CD8-positive, alpha-beta T cell (primary cell): ENCODE measurements at regions of chr1 and their contacts with region 1.

Region 1: GRCh38 chr1:30718636-30719405 is 4.6 kb downstream of the MATN1 start:
- DNase-seq: peak; percentile 77 to 97 (median 84)
- ATAC-seq: peak; percentile 11
- H3K4me3 ChIP-seq: peak overlapping the region; percentile 84 to 98
- H3K4me3 Mint-ChIP-seq: peak overlapping the region; percentile 87
- H3K27ac ChIP-seq: peak overlapping the region; percentile 99
- H3K27ac Mint-ChIP-seq: peak overlapping the region; percentile 94
- H3K4me1 ChIP-seq: peaks cover 34% of the 10 kb centered on the region
- H3K4me1 Mint-ChIP-seq: peaks cover 42% of the 10 kb centered on the region
- H3K27me3 ChIP-seq: no peaks in the 10 kb centered on the region
- H3K27me3 Mint-ChIP-seq: no peaks in the 10 kb centered on the region
- CTCF ChIP-seq: no peak

Region 2: GRCh38 chr1:30738040-30738714 is 19.4 kb after region 1 on chr1:
- CTCF ChIA-PET with region 1: interaction called, 64 read pairs
- POLR2A ChIA-PET with region 1: interaction called, 24 read pairs
- intact Hi-C with region 1: loop called (anchors 1 kb)
- DNase-seq: no peak
- ATAC-seq: no peak
- H3K4me3 ChIP-seq: no peak overlapping the region
- H3K4me3 Mint-ChIP-seq: no peak overlapping the region
- H3K27ac ChIP-seq: peak overlapping the region; percentile 18 to 40
- H3K27ac Mint-ChIP-seq: peak overlapping the region; percentile 85
- H3K4me1 ChIP-seq: peaks cover 41% of the 10 kb centered on the region
- H3K4me1 Mint-ChIP-seq: peaks cover 57% of the 10 kb centered on the region
- H3K27me3 ChIP-seq: no peaks in the 10 kb centered on the region
- H3K27me3 Mint-ChIP-seq: no peaks in the 10 kb centered on the region
- CTCF ChIP-seq: no peak

Region 3: DNA sequence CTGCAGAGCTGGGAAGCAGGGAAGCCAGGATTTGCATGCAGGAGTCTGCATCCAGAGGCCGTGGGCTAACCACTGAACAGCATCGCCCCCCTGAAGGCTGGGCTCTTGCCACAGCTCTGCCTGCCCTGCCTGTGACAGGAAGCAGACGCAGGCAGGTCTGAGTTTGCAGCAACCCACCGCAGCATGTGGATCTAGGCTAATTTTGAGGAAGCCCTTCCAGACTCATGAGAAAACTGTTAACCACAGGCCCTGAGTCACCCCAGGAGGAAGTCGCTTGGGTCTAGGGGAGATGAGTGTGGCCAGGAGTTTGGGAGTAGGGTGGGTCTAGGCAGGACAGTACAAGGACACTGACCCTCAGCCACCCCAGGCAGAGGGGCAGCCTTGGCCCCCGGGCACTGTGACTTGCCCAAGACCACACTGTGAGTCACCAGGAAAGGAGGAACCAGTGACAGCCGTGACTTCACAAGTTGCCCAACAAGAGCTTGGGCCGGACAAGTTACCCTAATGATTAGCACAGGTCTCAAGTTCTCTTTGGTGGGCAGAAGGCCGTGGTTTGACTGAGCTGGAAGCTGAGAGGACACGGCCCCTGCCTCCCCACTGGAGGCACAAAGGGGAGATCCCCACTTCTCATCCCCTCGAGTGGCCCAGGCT is 37.8 kb after region 1 on chr1:
- CTCF ChIA-PET with region 1: interaction called, 86 read pairs
- POLR2A ChIA-PET with region 1: interaction called, 101 read pairs
- intact Hi-C with region 1: loop called (anchors 2 kb)
- DNase-seq: peak; percentile 52 to 92 (median 80)
- ATAC-seq: peak; percentile 59
- H3K4me3 ChIP-seq: peak overlapping the region; percentile 70 to 87
- H3K4me3 Mint-ChIP-seq: peak overlapping the region; percentile 97
- H3K27ac ChIP-seq: peak overlapping the region; percentile 78 to 92
- H3K27ac Mint-ChIP-seq: peak overlapping the region; percentile 99
- H3K4me1 ChIP-seq: peaks cover 72% of the 10 kb centered on the region
- H3K4me1 Mint-ChIP-seq: peaks cover 86% of the 10 kb centered on the region
- H3K27me3 ChIP-seq: no peaks in the 10 kb centered on the region
- H3K27me3 Mint-ChIP-seq: no peaks in the 10 kb centered on the region
- CTCF ChIP-seq: no peak

Region 4: DNA sequence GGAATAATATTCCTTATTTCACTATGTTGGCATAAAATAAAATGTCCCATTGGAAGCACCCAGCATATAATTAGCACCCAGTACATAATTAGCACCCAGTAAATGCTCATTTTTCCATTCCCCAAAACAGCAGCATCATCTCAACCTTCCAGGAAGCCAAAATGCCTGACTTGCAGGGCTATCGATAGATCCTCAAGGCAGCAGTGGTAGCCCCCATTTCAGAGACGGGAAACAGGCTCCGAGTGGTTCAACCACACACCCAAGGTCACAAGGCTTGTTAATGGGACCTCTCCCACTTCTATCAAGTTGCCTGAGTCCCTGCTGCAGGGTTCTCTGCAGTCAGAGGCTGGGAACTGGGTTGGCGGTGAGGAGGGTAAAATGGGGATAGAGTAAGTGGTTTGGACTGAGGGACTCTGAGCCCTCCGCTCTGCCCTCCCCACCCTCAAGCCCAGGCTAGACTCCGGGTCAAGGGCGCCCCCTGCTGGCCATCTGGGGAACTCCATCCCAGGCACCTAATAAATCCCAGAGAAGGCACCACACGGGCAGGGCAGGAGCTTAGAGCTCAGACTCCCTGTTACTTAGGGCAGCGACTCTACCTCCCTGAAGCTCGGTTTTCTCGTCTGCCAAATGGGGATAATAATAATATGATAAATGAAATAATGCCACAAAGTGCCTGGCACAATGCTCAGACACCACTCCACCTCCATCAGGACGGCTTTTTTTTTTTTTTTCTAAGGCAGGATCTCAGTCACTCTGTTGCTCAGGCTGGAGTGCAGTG is 60.7 kb after region 1 on chr1:
- CTCF ChIA-PET with region 1: interaction called, 485 read pairs
- POLR2A ChIA-PET with region 1: interaction called, 50 read pairs
- intact Hi-C with region 1: loop called in 1 of 2 experiments (anchors 1 kb)
- DNase-seq: peak; percentile 84 to 99 (median 90)
- ATAC-seq: peak; percentile 89
- H3K4me3 ChIP-seq: peak overlapping the region in 1 of 2 experiments; percentile 8
- H3K4me3 Mint-ChIP-seq: no peak overlapping the region
- H3K27ac ChIP-seq: no peak overlapping the region
- H3K27ac Mint-ChIP-seq: no peak overlapping the region
- H3K4me1 ChIP-seq: peaks cover 16% of the 10 kb centered on the region
- H3K4me1 Mint-ChIP-seq: peaks cover 17% of the 10 kb centered on the region
- H3K27me3 ChIP-seq: no peaks in the 10 kb centered on the region
- H3K27me3 Mint-ChIP-seq: no peaks in the 10 kb centered on the region
- CTCF ChIP-seq: peak; percentile 83

Region 5: DNA sequence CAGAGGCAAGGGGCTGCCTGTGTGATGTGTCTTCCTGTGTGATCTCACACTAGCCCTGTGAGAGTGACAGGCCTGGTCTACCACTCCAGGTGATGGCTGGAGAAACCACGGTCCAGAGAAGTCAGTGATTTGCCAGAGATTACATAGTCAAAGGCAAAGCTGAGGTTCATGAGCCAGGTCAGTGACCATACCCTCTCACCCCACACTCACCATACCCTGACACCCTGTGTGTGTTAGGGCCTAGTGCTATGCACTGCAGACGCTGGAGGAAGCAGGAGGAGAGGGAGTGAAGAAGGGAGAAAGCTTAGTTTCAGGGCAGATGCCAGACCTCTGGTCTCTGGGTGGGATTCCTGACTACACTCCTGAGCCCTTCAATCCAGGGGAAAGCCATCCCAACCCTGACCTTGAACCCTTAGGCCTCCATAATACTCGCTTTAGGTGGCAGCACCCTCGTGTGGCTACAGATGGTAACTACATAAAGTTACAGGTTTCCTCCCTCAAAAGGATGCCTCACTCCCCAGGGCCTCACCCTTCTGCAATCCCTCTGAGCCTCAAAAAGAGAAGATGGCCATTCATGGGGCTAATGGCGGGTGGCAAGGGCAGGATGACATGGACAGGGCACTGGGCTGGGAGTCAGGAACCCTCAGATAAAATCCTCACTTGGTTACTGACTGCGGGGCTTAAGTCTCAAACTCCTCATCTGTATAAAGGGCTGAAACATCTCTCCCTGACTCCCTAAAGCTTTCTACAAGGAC is 210.5 kb after region 1 on chr1:
- CTCF ChIA-PET with region 1: interaction called, 10 read pairs
- POLR2A ChIA-PET with region 1: no interaction called
- intact Hi-C with region 1: loop called (anchors 1 kb)
- DNase-seq: peak in 7 of 9 experiments; percentile 20 to 65 (median 51)
- ATAC-seq: peak; percentile 76
- H3K4me3 ChIP-seq: no peak overlapping the region
- H3K4me3 Mint-ChIP-seq: no peak overlapping the region
- H3K27ac ChIP-seq: peak overlapping the region in 1 of 2 experiments; percentile 55
- H3K27ac Mint-ChIP-seq: peak overlapping the region; percentile 10
- H3K4me1 ChIP-seq: peaks cover 3% of the 10 kb centered on the region
- H3K4me1 Mint-ChIP-seq: no peaks in the 10 kb centered on the region
- H3K27me3 ChIP-seq: no peaks in the 10 kb centered on the region
- H3K27me3 Mint-ChIP-seq: no peaks in the 10 kb centered on the region
- CTCF ChIP-seq: peak; percentile 76

Region 6: DNA sequence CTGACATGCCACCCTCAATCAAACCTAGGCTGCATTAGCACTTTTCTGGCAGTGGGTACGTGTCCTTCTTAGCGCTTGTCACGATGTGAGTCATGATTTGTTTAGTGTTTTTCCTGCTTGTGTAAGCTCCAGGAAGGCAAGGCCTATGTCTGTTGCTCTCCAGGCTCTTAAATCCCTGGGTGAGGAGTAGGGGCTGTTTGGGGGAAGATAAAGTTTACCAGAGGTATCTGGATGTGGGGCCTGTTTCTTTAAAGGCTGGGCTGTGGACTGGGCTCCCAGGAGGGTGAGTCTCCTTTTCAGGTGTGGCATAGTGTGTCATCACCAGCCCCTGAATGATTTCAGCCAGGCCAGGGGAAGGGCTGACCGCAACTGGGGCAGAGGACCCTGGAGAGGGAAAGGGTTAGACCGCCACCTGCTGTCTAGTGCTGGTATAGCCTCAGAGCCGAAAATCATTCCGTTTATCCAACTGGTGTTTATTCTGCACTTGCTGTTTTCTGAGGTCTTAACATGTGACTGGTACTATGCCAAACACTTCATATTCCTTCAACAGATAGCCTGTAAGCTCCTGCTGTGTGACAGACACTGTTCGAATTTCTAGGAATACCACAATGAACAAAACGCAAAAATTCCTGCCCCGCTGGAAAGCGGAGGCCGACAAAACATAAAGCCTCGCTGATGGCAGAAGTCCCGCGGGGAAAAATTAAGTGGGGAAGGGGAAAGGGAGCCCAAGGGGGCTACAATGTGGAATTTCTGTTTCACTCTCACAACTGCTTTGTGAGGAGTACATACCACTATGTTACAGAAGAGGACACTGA is 703.9 kb after region 1 on chr1:
- CTCF ChIA-PET with region 1: no interaction called
- POLR2A ChIA-PET with region 1: no interaction called
- intact Hi-C with region 1: loop called in 1 of 2 experiments (anchors 10 kb)
- DNase-seq: peak; percentile 27 to 78 (median 67)
- ATAC-seq: peak; percentile 77
- H3K4me3 ChIP-seq: no peak overlapping the region
- H3K4me3 Mint-ChIP-seq: no peak overlapping the region
- H3K27ac ChIP-seq: no peak overlapping the region
- H3K27ac Mint-ChIP-seq: no peak overlapping the region
- H3K4me1 ChIP-seq: no peaks in the 10 kb centered on the region
- H3K4me1 Mint-ChIP-seq: no peaks in the 10 kb centered on the region
- H3K27me3 ChIP-seq: no peaks in the 10 kb centered on the region
- H3K27me3 Mint-ChIP-seq: peaks cover 24% of the 10 kb centered on the region
- CTCF ChIP-seq: peak; percentile 86